ENCODE measurements at regions of chr13 and their contacts with region 1.

Region 1: DNA sequence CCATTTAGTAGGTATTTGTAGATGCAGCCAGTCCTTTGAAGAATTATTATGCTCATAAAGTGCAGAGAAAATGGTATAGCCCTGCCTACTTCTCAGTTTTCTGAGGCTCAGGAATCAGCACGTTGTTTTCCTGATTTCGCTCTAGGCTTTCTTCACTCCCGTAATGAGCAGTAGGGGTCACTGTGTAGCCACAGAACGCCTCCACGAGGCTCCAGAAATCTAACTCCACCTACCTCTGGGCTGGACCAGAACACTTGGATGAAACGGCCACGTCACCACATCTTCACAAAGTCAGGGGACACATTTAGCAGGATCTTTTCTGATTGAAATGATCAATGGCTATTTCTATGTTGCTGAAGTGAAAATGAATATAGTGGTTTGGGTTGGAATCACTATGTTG is 49.8 kb upstream of the GTF3A start:
- DNase-seq: peak in 1 of 2 donors; percentile 85
- H3K4me3 ChIP-seq: no peak overlapping the region
- H3K27ac ChIP-seq: no peak overlapping the region
- H3K4me1 ChIP-seq: no peaks in the 10 kb centered on the region
- H3K27me3 ChIP-seq: no peaks in the 10 kb centered on the region
- CTCF ChIP-seq: peak; percentile 39 to 75 (median 61)

Region 2: DNA sequence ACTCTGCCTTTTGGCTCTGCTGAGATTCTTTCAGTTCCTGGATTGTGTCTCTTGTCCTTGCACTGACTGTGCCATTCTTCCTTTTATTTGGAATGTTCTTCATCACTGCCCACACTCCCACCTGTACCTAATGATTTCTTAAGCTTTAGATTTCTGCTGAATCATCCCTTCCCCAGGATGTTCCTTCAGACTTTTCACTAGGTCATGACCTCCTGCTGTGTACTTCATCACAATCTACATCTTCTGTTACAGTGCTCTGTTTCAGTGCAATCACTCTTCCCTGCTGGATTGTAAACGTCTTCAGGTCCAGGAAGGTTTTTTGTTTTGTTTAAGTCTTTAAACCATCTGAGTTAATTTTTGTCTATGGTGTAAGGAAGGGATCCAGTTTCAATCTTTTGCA is 1721.9 kb before region 1 on chr13:
- intact Hi-C with region 1: no loop called
- DNase-seq: no peak
- H3K4me3 ChIP-seq: no peak overlapping the region
- H3K27ac ChIP-seq: no peak overlapping the region
- H3K4me1 ChIP-seq: no peaks in the 10 kb centered on the region
- H3K27me3 ChIP-seq: no peaks in the 10 kb centered on the region
- CTCF ChIP-seq: no peak

Region 3: DNA sequence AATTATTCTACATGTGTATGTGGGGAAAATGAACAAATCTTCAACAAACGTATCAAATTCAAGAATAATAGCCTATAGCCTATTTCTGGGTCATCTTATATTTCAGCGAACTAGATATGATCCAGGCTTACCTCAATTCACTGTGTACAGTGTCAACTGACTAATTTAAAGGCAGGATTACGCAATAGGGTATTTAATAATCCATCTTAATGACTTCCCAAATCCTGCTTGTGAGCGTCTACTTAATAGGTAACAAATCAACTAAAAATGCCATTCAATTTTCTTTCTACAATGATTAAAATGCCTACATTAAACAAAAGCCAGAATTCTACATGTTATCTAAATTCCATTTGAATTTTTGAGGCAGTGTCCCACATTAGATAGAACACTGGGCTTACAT is 270.0 kb before region 1 on chr13:
- intact Hi-C with region 1: no loop called
- DNase-seq: no peak
- H3K4me3 ChIP-seq: no peak overlapping the region
- H3K27ac ChIP-seq: no peak overlapping the region
- H3K4me1 ChIP-seq: no peaks in the 10 kb centered on the region
- H3K27me3 ChIP-seq: no peaks in the 10 kb centered on the region
- CTCF ChIP-seq: no peak

Region 4: DNA sequence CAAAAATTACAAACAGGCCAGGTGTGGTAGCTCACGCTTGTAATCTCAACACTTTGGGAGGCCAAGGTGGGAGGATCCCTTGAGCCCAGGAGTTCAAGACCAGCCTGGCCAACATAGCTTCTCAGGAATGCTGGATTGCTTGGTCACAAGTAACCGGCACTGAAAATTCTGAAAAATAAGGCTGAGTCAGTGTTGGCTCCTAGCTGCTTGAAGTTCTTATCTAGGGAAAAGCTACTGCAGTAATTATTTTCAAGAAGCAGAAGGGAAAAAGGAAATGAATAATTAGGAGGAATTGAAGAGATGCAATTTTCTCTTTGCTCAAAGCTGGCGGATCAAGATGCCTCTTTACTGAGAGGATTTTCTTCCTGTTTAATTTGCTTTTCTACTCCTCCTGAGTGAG is 25.2 kb before region 1 on chr13:
- intact Hi-C with region 1: no loop called
- DNase-seq: no peak
- H3K4me3 ChIP-seq: no peak overlapping the region
- H3K27ac ChIP-seq: no peak overlapping the region
- H3K4me1 ChIP-seq: peaks cover 0 to 2% of the 10 kb centered on the region in 2 donors
- H3K27me3 ChIP-seq: no peaks in the 10 kb centered on the region
- CTCF ChIP-seq: no peak

Region 5: GRCh38 chr13:27424246-27425157 is 49.9 kb after region 1 on chr13 and contains the start of gene GTF3A:
- intact Hi-C with region 1: loop called (anchors 2 kb)
- DNase-seq: peak; percentile 37 to 87
- H3K4me3 ChIP-seq: peak within 1 kb of the TSS; percentile 82 to 94
- H3K27ac ChIP-seq: peak within 1 kb of the TSS; percentile 84 to 87
- H3K4me1 ChIP-seq: peaks cover 9 to 22% of the 10 kb centered on the region in 2 donors
- H3K27me3 ChIP-seq: no peaks in the 10 kb centered on the region
- CTCF ChIP-seq: no peak
- total RNA-seq, gene GTF3A: 197 TPM

Region 6: DNA sequence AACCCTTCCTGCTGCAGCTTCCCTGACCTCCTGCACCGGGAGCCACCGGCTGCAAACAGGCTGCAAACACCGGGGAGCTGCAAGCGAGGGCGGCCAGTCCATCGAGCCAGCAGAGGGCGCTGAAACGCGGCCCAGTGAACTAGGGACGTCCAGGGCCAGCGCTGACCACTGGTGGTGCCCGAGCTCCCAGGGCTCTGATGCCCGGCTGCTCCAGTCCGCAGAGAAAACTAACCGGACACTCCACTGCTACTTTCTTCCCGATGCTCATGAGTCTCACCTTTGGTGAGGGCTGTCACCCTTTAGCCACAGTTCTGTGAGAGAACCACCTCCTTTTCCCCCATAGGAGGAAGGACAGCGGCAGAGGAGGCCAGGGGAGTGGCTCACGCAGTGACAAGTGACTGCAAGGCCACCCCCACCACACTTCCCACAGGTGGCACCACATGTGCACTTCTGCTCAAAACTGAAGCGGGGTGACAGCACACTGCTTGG is 158.5 kb after region 1 on chr13:
- intact Hi-C with region 1: loop called (anchors 5 kb)
- DNase-seq: peak; percentile 18 to 84
- H3K4me3 ChIP-seq: no peak overlapping the region
- H3K27ac ChIP-seq: no peak overlapping the region
- H3K4me1 ChIP-seq: no peaks in the 10 kb centered on the region
- H3K27me3 ChIP-seq: no peaks in the 10 kb centered on the region
- CTCF ChIP-seq: peak; percentile 78 to 88 (median 86)